ENCODE measurements at regions of chr18 and their contacts with region 1.

Region 1: DNA sequence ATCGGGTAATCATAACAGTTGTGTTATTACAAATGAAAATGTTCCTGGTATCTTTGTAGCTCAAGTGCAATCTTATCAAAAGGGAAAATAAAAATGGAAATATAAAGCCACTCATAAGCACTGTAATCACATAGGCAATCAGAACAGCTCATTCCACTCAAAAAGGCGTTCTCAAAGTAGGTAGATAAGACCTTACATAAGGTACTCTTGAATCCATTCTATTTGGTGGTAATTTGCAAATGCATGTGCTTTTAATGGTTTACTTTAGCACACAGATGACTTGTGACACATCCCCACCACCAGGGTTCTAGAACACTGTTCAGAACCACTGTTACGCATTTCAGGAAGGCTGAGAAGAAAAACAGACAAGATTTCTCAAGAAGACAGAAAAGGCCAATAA is 86.7 kb upstream of the NARS1 start:
- DNase-seq: no peak
- ATAC-seq: no peak
- H3K4me3 Mint-ChIP-seq: no peak overlapping the region
- H3K27ac Mint-ChIP-seq: no peak overlapping the region
- H3K4me1 Mint-ChIP-seq: peaks cover 26% of the 10 kb centered on the region
- H3K27me3 Mint-ChIP-seq: no peaks in the 10 kb centered on the region
- CTCF ChIP-seq: no peak

Region 2: DNA sequence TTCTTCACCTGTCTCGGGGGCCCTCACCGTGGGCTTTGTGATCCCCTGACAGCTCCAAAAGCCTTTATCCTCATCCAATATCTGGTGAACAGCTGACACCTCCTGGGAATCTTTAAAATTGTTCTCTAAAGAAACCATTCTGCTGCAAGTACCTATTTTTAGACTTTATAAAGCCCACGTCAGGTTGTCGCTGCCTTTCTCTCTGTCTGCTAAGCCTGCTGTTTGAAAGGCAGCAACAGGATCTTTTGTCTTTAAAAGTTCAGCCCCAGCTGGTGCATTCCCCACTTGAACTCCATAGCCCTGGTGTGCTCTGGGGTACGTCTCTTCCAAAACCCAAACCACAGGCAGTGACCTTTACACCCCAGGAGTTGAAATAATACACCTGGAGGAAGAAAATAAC is 480.7 kb after region 1 on chr18:
- CTCF ChIA-PET with region 1: no interaction called
- POLR2A ChIA-PET with region 1: interaction called, 11 read pairs
- intact Hi-C with region 1: no loop called
- DNase-seq: no peak
- ATAC-seq: no peak
- H3K4me3 Mint-ChIP-seq: no peak overlapping the region
- H3K27ac Mint-ChIP-seq: no peak overlapping the region
- H3K4me1 Mint-ChIP-seq: no peaks in the 10 kb centered on the region
- H3K27me3 Mint-ChIP-seq: no peaks in the 10 kb centered on the region
- CTCF ChIP-seq: no peak